ENCODE measurements at regions of chr4 and their contacts with region 1.

Region 1: DNA sequence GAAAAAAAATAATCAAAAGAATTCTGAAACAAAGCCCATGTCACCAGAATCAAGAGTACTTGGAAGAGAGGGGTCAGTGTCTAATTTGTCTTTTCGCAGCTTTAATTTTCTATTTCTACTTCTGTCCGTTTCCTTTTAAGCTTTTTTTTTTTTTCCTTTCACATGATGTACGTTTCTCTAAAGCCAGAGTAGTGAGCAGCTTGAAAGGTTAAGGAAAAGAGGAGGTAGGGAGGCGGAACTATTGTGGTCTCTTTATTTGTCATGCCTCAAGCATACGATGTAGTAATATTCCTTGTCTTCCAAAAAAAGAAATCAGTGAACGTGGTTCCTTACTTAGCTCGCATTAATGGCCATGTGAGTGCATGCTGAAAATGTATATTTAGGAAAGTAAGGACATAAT is 311.5 kb downstream of the TENM3 start:
- DNase-seq: no peak
- H3K4me3 ChIP-seq: no peak overlapping the region
- H3K27ac ChIP-seq: no peak overlapping the region
- H3K4me1 ChIP-seq: peaks cover 11% of the 10 kb centered on the region
- H3K27me3 ChIP-seq: no peaks in the 10 kb centered on the region
- CTCF ChIP-seq: no peak
- POLR2A ChIP-seq: no peak

Region 2: DNA sequence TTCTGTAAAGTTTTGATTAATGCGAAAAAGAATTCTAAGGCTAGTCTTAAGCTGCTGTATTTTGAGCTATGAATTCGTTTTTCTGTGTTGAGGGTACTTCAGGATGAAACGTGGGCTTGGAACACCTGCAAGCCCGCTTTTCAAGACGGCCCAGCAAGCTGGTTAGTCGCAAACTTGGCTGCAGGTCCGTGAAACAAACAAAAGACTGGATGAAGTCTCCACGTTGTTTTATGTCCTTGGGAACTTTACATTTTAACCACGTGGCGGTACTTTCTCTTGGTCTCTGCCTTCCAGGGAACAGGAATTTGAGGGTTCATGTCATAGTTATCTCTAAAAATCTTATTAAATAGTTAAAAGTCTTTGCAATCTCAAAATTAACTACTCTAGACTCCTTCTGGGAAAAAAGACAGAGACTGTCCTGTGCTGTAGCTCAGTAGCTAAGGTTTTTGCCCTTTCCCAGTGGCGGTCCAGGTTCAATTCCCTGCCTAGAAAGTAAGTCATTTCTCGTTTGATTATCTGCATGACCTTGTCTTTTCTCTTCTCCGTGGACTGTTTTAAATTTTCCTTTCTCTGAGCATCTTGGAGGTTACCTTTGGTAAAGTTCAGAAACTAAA is 290.5 kb before region 1 on chr4:
- intact Hi-C with region 1: loop called (anchors 5 kb)
- DNase-seq: no peak
- H3K4me3 ChIP-seq: no peak overlapping the region
- H3K27ac ChIP-seq: no peak overlapping the region
- H3K4me1 ChIP-seq: no peaks in the 10 kb centered on the region
- H3K27me3 ChIP-seq: no peaks in the 10 kb centered on the region
- CTCF ChIP-seq: no peak
- POLR2A ChIP-seq: no peak

Region 3: DNA sequence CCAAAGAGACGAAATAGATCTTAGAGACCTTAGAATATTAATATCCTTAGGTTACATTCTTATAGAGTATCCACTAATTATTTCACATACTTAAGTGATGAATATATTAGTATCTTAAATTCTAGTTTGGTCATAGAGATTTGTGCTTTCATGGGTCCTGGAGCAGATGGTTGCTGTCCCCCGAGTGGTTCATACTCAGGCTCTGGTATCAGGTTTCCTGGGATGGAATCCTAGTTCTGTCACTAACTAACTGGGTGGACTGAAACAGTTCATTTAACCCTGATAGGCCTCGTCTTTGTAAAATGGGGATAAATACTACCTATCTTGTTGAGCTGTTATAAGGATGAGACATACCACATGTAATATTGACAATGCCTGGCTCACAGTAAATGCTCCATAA is 46.9 kb before region 1 on chr4:
- intact Hi-C with region 1: no loop called
- DNase-seq: no peak
- H3K4me3 ChIP-seq: no peak overlapping the region
- H3K27ac ChIP-seq: no peak overlapping the region
- H3K4me1 ChIP-seq: no peaks in the 10 kb centered on the region
- H3K27me3 ChIP-seq: no peaks in the 10 kb centered on the region
- CTCF ChIP-seq: no peak
- POLR2A ChIP-seq: no peak